B cell (primary cell): ENCODE measurements at regions of chr12 and their contacts with region 1.

Region 1: GRCh38 chr12:11075642-11076041 is 13.5 kb upstream of the TAS2R46 start:
- DNase-seq: no peak
- ATAC-seq: no peak
- H3K4me3 ChIP-seq: no peak overlapping the region
- H3K4me3 Mint-ChIP-seq: no peak overlapping the region
- H3K27ac ChIP-seq: no peak overlapping the region
- H3K27ac Mint-ChIP-seq: no peak overlapping the region
- H3K4me1 ChIP-seq: no peaks in the 10 kb centered on the region
- H3K4me1 Mint-ChIP-seq: peaks cover 9% of the 10 kb centered on the region
- H3K27me3 ChIP-seq: no peaks in the 10 kb centered on the region
- H3K27me3 Mint-ChIP-seq: no peaks in the 10 kb centered on the region
- CTCF ChIP-seq: no peak

Region 2: GRCh38 chr12:11015775-11016430 is 59.7 kb before region 1 on chr12:
- CTCF ChIA-PET with region 1: no interaction called
- POLR2A ChIA-PET with region 1: no interaction called
- intact Hi-C with region 1: loop called (anchors 1 kb)
- DNase-seq: no peak
- ATAC-seq: no peak
- H3K4me3 ChIP-seq: no peak overlapping the region
- H3K4me3 Mint-ChIP-seq: no peak overlapping the region
- H3K27ac ChIP-seq: no peak overlapping the region
- H3K27ac Mint-ChIP-seq: no peak overlapping the region
- H3K4me1 ChIP-seq: no peaks in the 10 kb centered on the region
- H3K4me1 Mint-ChIP-seq: peaks cover 2% of the 10 kb centered on the region
- H3K27me3 ChIP-seq: no peaks in the 10 kb centered on the region
- H3K27me3 Mint-ChIP-seq: no peaks in the 10 kb centered on the region
- CTCF ChIP-seq: no peak

Region 3: GRCh38 chr12:11321980-11322379 is 246.3 kb after region 1 on chr12:
- CTCF ChIA-PET with region 1: no interaction called
- POLR2A ChIA-PET with region 1: no interaction called
- intact Hi-C with region 1: no loop called
- DNase-seq: no peak
- ATAC-seq: no peak
- H3K4me3 ChIP-seq: no peak overlapping the region
- H3K4me3 Mint-ChIP-seq: no peak overlapping the region
- H3K27ac ChIP-seq: no peak overlapping the region
- H3K27ac Mint-ChIP-seq: no peak overlapping the region
- H3K4me1 ChIP-seq: no peaks in the 10 kb centered on the region
- H3K4me1 Mint-ChIP-seq: no peaks in the 10 kb centered on the region
- H3K27me3 ChIP-seq: no peaks in the 10 kb centered on the region
- H3K27me3 Mint-ChIP-seq: no peaks in the 10 kb centered on the region
- CTCF ChIP-seq: no peak